HEK293 (cell line): ENCODE measurements at regions of chrX and their contacts with region 1.

Region 1: DNA sequence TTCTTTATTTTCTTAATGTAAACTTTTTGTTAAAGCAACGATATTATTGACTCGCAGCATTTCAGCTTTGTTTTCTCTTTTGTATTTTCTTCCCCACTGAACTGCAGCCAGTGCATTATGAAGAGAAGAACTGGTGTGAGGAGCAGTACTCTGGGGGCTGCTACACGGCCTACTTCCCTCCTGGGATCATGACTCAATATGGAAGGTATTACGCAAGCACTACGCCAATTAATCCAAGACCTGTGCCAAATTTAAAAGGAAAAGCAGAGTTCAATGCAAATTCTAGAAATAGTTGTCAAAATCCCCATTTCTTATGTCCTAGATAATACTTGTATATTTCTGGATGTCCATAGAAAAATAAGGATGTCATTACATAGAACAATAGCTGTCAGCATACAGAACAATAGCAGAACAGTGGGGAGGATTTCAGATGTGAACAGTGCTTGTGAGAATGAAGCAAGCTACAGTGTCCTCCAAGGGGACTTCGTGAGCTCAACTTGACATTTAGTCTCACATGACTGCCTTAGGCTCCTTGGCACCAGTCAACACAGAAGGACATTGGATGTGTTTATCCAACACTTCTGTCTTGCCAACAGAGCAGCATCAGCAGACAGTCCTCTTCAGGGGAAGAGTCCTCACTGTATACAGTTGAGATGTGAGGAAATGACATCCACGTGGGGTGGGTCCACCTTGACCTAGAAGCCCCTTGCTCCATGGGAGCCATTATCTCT is 85.9 kb downstream of the MAOA start:
- H3K4me3 ChIP-seq: no peak overlapping the region
- H3K27ac ChIP-seq: no peak overlapping the region
- H3K4me1 ChIP-seq: no peaks in the 10 kb centered on the region
- CTCF ChIP-seq: no peak

Region 2: DNA sequence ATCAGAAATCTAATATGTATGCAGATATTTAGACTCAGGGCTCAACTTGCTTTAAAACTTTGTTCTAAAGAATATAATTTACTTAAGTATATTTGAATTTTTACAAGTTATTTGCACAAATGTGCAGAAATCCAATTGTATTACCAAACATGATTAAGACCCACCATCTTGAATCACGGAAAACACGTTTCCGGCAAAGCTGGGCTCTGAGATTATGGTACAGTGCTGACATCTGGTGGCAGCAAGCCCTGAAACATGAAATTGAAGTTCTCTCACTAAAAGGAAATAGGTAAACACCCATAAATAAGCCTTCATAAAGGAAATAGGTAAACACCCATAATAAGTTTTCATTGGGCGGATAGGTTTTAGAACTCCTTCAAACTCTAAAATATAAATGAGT is 184.2 kb before region 1 on chrX:
- CTCF ChIA-PET with region 1: interaction called, 24 read pairs
- POLR2A ChIA-PET with region 1: interaction called, 10 read pairs
- H3K4me3 ChIP-seq: no peak overlapping the region
- H3K27ac ChIP-seq: no peak overlapping the region
- H3K4me1 ChIP-seq: no peaks in the 10 kb centered on the region
- CTCF ChIP-seq: no peak

Region 3: GRCh38 chrX:43564953-43565352 is 177.1 kb before region 1 on chrX:
- CTCF ChIA-PET with region 1: interaction called, 24 read pairs
- POLR2A ChIA-PET with region 1: interaction called, 10 read pairs
- H3K4me3 ChIP-seq: no peak overlapping the region
- H3K27ac ChIP-seq: no peak overlapping the region
- H3K4me1 ChIP-seq: no peaks in the 10 kb centered on the region
- CTCF ChIP-seq: no peak

Region 4: DNA sequence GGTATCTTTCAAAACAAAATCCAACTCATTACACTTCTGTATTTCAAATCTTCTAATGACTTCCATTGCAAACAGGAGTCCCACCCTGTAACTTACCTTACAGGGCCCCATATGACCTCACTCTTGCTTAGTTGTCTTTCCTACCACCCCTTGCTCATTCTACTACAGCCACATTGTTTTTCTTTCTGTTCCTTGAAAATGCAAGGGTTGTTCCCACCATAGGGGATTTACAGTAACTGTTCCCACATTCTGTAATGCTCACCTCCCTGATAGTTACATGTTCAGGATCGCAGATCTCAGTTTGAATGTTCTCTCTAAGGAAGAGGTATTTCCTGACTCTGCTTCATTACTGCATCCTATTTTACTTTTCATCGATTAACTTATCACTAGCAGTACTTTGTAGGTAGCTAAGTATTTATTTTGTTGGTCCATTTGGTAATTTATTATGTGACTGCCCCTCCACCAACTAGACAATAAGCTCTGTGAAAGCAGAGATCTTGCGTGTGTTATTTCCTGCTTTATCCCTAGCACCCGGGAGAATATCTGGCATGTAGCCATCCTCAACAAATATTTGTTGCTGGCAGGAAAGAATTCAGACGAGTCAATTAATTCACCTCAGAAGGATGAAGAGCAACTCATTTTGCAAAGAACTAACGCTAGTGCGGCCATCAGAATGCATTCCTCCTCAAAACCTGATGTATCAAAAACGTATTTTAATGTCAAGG is 118.8 kb after region 1 on chrX:
- CTCF ChIA-PET with region 1: no interaction called
- POLR2A ChIA-PET with region 1: no interaction called
- H3K4me3 ChIP-seq: no peak overlapping the region
- H3K27ac ChIP-seq: no peak overlapping the region
- H3K4me1 ChIP-seq: no peaks in the 10 kb centered on the region; the same call in 1 of the 2 replicates
- CTCF ChIP-seq: no peak